Ascending aorta (tissue), 2 donors: ENCODE measurements at regions of chr21 and their contacts with region 1.

Region 1: GRCh38 chr21:45404730-45405270 is at the start of gene COL18A1:
- DNase-seq: peak in 1 of 2 donors; percentile 83
- H3K4me3 ChIP-seq: peak within 1 kb of the TSS; percentile 85 to 91
- H3K27ac ChIP-seq: peak within 1 kb of the TSS; percentile 92 to 93
- H3K4me1 ChIP-seq: peaks cover 15 to 29% of the 10 kb centered on the region in 2 donors
- H3K27me3 ChIP-seq: no peaks in the 10 kb centered on the region
- CTCF ChIP-seq: no peak
- total RNA-seq, gene COL18A1: 699 TPM

Region 2: DNA sequence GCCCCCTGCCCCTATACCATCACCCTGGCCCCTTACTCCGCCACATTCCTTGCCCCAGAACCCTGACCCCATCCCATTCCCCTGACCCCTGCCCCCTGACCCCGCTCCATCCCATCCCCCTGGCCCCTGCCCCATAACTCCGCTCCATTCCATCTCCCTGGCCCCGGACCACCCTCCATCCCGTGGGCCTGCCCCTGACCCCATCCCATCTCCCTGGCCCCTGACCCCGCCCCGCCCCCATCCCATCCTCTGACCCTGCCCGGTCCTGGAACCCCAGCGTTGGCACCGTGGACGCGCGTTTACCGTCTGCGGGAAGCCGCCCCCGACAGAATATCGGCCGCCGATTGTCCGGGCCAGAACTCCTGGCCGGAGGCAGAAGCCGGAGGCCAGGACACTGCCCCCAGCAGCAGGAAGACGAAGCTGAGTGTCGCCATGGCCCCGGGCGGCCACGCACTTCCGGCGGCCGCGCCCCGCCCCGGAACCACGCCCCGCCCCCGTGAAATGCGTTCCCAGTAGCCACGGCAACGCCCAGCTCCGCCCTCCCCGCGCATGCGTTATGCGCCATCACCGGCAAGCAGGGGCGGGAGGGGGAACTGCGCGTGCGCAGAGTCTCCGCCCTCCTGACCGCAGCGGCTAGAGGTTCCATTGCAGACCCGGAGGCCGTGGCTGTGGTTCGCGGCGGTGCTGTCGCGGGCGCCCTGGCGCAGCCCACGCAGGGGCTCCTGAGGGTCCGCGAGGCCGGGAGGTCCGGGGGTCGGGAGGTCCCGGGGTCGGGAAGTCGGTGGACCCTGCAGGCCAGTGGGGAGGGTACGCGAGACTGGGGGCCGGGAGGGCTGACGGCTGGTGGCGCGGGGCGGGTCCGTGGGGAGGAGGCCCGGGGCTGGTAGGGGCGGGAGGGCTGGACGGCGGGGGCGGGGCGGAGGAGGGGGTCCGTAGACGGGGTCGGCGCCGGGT is 117.1 kb before region 1 on chr21 and contains the start of gene POFUT2:
- intact Hi-C with region 1: loop called (anchors 1 kb)
- DNase-seq: peak; percentile 83 to 98
- H3K4me3 ChIP-seq: peak within 1 kb of the TSS; percentile 61 to 98
- H3K27ac ChIP-seq: peak within 1 kb of the TSS; percentile 83 to 88
- H3K4me1 ChIP-seq: peaks cover 11 to 20% of the 10 kb centered on the region in 2 donors
- H3K27me3 ChIP-seq: no peaks in the 10 kb centered on the region
- CTCF ChIP-seq: peak in 1 of 3 experiments; percentile 5
- total RNA-seq, gene POFUT2: 39.4 TPM

Region 3: DNA sequence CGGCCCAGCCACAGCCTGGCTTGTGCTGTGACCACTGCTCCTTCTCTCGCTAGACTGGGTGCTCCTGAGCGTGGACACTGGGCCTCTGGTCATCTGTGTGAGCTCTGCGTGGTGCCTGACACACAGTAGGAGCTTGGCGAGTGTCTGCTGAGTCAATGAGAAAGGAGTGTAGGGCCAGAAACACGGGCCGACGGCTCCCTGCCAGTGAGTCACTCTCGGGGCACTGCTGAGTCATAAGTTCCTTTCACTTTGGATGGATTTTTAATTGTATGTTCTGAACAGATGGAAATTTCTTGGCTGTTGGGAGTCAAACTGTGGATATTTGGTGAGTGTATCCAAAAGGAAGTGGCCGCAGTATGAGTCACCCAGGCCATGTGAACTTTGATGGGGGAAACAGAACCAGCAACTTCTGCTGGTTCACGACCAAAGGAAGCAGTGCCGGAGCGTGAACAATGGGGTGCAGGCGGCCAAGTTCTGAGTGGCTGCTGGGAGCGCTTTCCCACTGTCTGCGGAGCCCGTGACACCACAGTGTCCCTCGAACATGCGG is 40.8 kb before region 1 on chr21:
- intact Hi-C with region 1: loop called (anchors 1 kb)
- DNase-seq: peak; percentile 83 to 96
- H3K4me3 ChIP-seq: peak overlapping the region in 1 of 2 donors; percentile 36
- H3K27ac ChIP-seq: peak overlapping the region; percentile 98 to 99
- H3K4me1 ChIP-seq: peaks cover 21 to 44% of the 10 kb centered on the region in 2 donors
- H3K27me3 ChIP-seq: no peaks in the 10 kb centered on the region
- CTCF ChIP-seq: no peak